ENCODE measurements at regions of chr12 and their contacts with region 1.

Region 1: GRCh38 chr12:5988659-5989116 is 43.6 kb upstream of the ANO2 start:
- DNase-seq: peak; percentile 72
- H3K4me3 ChIP-seq: no peak overlapping the region
- H3K27ac ChIP-seq: no peak overlapping the region
- H3K4me1 ChIP-seq: no peaks in the 10 kb centered on the region
- CTCF ChIP-seq: peak; percentile 97

Region 2: DNA sequence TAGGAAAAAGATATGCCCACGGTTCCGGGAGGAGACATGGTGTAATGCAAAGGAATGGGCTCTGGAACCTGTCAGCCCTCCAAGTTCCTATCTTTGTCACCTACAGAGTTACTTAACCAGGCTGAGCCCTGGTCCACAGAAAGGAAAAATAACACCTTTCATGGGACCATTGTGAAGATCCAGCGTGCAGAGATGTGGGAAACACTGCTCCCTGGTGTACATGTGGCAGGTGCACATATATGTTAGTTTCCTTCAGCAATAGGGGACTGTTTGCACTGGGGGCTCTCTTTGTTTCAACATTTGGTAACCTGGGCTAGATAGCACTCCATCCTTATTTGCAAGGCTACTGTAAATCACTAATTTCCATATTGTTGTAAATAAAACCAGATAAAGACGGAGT is 116.0 kb before region 1 on chr12:
- CTCF ChIA-PET with region 1: no interaction called
- POLR2A ChIA-PET with region 1: no interaction called
- intact Hi-C with region 1: no loop called
- DNase-seq: no peak
- H3K4me3 ChIP-seq: no peak overlapping the region
- H3K27ac ChIP-seq: no peak overlapping the region
- H3K4me1 ChIP-seq: no peaks in the 10 kb centered on the region
- CTCF ChIP-seq: 0 out of 2 replicates have a peak, but pooled peaks have one; percentile 35

Region 3: GRCh38 chr12:5965950-5966383 is 22.7 kb before region 1 on chr12:
- CTCF ChIA-PET with region 1: no interaction called
- POLR2A ChIA-PET with region 1: no interaction called
- intact Hi-C with region 1: loop called (anchors 1 kb)
- DNase-seq: peak; percentile 57
- H3K4me3 ChIP-seq: no peak overlapping the region
- H3K27ac ChIP-seq: no peak overlapping the region
- H3K4me1 ChIP-seq: no peaks in the 10 kb centered on the region
- CTCF ChIP-seq: peak; percentile 88

Region 4: DNA sequence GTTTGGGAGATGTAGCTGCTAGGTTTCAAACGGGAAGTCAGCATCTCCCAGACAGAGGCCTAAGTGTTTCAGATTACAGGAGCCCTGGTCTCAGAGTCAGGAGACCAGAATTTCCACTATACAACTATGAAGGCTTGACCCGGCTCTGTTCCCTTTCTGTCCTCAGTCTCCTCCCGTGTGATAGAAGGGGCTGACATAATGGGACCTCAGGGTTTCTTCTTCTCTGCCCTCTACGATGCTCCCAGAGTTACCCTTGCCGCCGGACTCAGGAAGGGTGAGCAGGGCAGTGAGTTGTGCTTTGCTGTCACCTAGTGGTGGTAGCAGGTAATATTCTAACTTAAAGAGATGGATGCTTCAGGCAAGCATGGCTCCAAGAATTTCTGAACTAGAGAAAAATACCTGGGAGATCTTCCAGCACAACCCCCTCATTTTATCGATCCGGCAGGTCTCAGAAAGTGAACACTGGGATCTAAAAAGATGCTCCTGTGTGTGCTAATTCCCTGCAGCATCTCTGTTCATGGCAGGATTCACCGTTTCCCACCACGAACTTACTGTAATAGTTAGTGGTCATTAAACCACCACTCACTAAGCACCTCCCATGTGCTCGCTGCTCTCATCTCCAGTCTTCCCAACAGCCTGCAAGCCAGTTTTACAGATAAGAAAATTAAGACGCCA is 51.3 kb after region 1 on chr12:
- CTCF ChIA-PET with region 1: interaction called, 7 read pairs
- POLR2A ChIA-PET with region 1: no interaction called
- intact Hi-C with region 1: loop called (anchors 1 kb)
- DNase-seq: peak; percentile 72
- H3K4me3 ChIP-seq: no peak overlapping the region
- H3K27ac ChIP-seq: no peak overlapping the region
- H3K4me1 ChIP-seq: no peaks in the 10 kb centered on the region
- CTCF ChIP-seq: peak; percentile 96

Region 5: DNA sequence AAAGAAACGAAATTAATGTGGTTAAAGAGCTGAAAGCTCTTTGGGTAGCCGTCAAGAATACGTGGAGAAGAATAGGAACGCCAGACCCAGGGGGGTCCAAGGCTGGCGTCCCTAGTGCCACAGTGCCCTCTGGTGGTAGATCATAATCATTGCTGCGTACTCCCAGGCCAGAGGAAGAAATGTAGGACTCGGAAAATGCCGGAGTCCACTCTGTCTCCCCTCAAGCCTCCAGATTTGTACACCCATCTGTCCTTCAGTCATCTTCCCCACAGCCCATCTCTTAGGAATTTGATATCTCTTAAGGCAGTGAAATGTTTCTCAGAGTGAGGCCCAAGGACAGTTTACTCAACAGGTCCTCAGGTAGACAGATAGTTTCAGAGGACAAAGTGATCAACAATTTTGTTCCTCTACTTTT is 296.4 kb after region 1 on chr12:
- CTCF ChIA-PET with region 1: no interaction called
- POLR2A ChIA-PET with region 1: no interaction called
- intact Hi-C with region 1: loop called (anchors 2 kb)
- DNase-seq: peak; percentile 74
- H3K4me3 ChIP-seq: no peak overlapping the region
- H3K27ac ChIP-seq: no peak overlapping the region
- H3K4me1 ChIP-seq: no peaks in the 10 kb centered on the region
- CTCF ChIP-seq: peak; percentile 98

Measured in OCI-LY7 (cell line).